Posterior vena cava (tissue), 2 donors: ENCODE measurements at regions of chr4 and their contacts with region 1.

Region 1: DNA sequence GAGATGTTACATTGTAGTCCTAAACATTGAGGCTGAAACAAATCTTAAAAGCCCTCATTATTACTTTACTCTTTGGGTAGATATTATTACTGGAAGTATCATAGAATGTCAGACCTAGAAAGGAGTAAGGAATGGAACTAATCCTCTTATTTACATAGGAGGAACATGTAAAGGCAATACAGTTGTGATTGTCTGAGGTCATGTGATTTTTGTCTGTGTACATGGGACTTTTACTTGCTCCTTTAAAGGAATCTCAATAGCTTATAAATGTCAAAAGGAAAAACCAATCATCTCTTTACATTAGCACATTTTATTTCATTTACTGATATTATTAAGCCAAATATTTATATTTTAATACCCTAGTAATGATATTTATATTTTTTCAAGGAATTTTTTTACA is 568.2 kb downstream of the CCSER1 start:
- DNase-seq: no peak

Region 2: GRCh38 chr4:88880501-88881226 is 1814.7 kb before region 1 on chr4:
- intact Hi-C with region 1: no loop called
- DNase-seq: no peak

Region 3: GRCh38 chr4:90187148-90187884 is 508.1 kb before region 1 on chr4:
- intact Hi-C with region 1: loop called in 1 of 2 experiments (anchors 5 kb)
- DNase-seq: no peak